ENCODE measurements at regions of chr3 and their contacts with region 1.

Region 1: GRCh38 chr3:159839561-159840379 is 148.9 kb upstream of the IL12A start:
- DNase-seq: no peak
- H3K4me3 ChIP-seq: no peak within 1 kb of the TSS
- H3K27ac ChIP-seq: no peak within 1 kb of the TSS
- H3K4me1 ChIP-seq: peaks cover 49% of the 10 kb centered on the region
- H3K27me3 ChIP-seq: no peaks in the 10 kb centered on the region
- CTCF ChIP-seq: no peak
- POLR2A ChIP-seq: no peak

Region 2: GRCh38 chr3:159123877-159124276 is 715.9 kb before region 1 on chr3:
- CTCF ChIA-PET with region 1: no interaction called
- POLR2A ChIA-PET with region 1: no interaction called
- dilution Hi-C with region 1: no loop called
- intact Hi-C with region 1: no loop called
- DNase-seq: no peak
- H3K4me3 ChIP-seq: no peak overlapping the region
- H3K27ac ChIP-seq: no peak overlapping the region
- H3K4me1 ChIP-seq: peaks cover 8% of the 10 kb centered on the region
- H3K27me3 ChIP-seq: no peaks in the 10 kb centered on the region
- CTCF ChIP-seq: no peak
- POLR2A ChIP-seq: no peak

Region 3: GRCh38 chr3:159726231-159726964 is 113.4 kb before region 1 on chr3:
- CTCF ChIA-PET with region 1: no interaction called
- POLR2A ChIA-PET with region 1: no interaction called
- dilution Hi-C with region 1: no loop called
- intact Hi-C with region 1: no loop called
- DNase-seq: no peak
- H3K4me3 ChIP-seq: no peak overlapping the region
- H3K27ac ChIP-seq: no peak overlapping the region
- H3K4me1 ChIP-seq: peaks cover 27% of the 10 kb centered on the region
- H3K27me3 ChIP-seq: peaks cover 2 to 5% of the 10 kb centered on the region in 2 experiments
- CTCF ChIP-seq: no peak
- POLR2A ChIP-seq: no peak

Region 4: GRCh38 chr3:159852821-159853505 is 13.2 kb after region 1 on chr3:
- CTCF ChIA-PET with region 1: interaction called, 33 read pairs
- POLR2A ChIA-PET with region 1: interaction called, 53 read pairs
- dilution Hi-C with region 1: no loop called
- intact Hi-C with region 1: loop called (anchors 1 kb)
- DNase-seq: peak; percentile 97
- H3K4me3 ChIP-seq: peak overlapping the region in 2 of 3 experiments; percentile 45 to 52
- H3K27ac ChIP-seq: peak overlapping the region; percentile 97
- H3K4me1 ChIP-seq: peaks cover 70% of the 10 kb centered on the region
- H3K27me3 ChIP-seq: no peaks in the 10 kb centered on the region
- CTCF ChIP-seq: no peak
- POLR2A ChIP-seq: peak; percentile 2

Region 5: GRCh38 chr3:160287666-160288065 is 447.9 kb after region 1 on chr3:
- CTCF ChIA-PET with region 1: no interaction called
- POLR2A ChIA-PET with region 1: no interaction called
- dilution Hi-C with region 1: no loop called
- intact Hi-C with region 1: no loop called
- DNase-seq: no peak
- H3K4me3 ChIP-seq: no peak overlapping the region
- H3K27ac ChIP-seq: no peak overlapping the region
- H3K4me1 ChIP-seq: no peaks in the 10 kb centered on the region
- H3K27me3 ChIP-seq: no peaks in the 10 kb centered on the region
- CTCF ChIP-seq: no peak
- POLR2A ChIP-seq: no peak

Region 6: GRCh38 chr3:160343132-160343531 is 503.4 kb after region 1 on chr3:
- CTCF ChIA-PET with region 1: no interaction called
- POLR2A ChIA-PET with region 1: no interaction called
- dilution Hi-C with region 1: no loop called
- intact Hi-C with region 1: no loop called
- DNase-seq: peak; percentile 23
- H3K4me3 ChIP-seq: no peak overlapping the region
- H3K27ac ChIP-seq: no peak overlapping the region
- H3K4me1 ChIP-seq: no peaks in the 10 kb centered on the region
- H3K27me3 ChIP-seq: no peaks in the 10 kb centered on the region
- CTCF ChIP-seq: peak in 1 of 2 donors; percentile 9
- POLR2A ChIP-seq: no peak